CD4-positive, alpha-beta memory T cell (primary cell): ENCODE measurements at regions of chr5 and their contacts with region 1.

Region 1: DNA sequence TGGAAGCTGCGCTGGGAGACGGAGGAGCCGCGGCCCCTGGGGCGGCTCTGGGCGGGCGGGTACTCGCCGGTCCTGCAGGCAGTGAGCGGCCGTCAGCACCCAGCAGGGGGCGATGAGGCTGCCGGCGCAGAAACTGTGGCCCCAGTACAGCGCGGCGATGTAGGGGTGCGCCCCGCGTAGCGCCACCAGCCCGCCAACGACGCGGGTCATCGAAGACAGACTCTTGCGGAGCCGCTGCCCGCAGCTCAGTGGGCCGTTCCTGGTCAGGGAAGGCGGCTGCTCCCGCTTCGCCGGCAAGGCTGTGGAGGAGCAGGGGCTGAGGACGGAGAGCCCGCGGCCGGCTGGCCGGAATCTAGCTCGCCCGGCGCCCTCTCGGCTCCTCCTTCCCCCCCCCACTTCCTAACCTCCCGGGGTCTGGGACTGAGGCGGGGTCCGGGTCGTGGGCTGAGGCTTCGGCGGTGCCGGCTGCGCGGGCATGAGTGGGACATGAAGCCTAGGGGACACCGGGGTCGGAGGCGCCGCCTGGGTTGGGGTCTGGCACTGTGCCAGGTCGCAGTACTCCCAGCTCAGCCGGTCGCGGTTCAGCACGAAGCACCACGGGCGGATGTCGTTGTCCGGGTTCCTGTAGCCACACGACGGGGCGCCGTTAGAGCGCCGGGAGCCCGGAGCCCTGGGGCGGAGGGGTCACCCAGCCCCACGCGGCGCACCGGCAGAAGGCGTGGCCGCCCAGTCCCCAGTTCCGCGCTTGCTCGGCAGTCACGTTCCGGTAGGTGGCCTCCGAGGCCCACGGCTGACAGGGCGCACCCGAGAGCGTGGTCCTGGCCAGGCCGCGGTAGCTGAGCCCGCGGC is 3.6 kb upstream of the PFN3 start:
- DNase-seq: peak; percentile 84 to 85 (median 85)
- H3K4me3 ChIP-seq: peak overlapping the region; percentile 42 to 70
- H3K4me3 Mint-ChIP-seq: peak overlapping the region; percentile 82 to 93 (median 86)
- H3K27ac ChIP-seq: peak overlapping the region; percentile 63
- H3K27ac Mint-ChIP-seq: peak overlapping the region in 6 of 7 donors; percentile 57 to 88 (median 80)
- H3K4me1 ChIP-seq: peaks cover 39% of the 10 kb centered on the region
- H3K4me1 Mint-ChIP-seq: peaks cover 6 to 36% (median 22%) of the 10 kb centered on the region in 4 donors
- H3K27me3 ChIP-seq: no peaks in the 10 kb centered on the region
- H3K27me3 Mint-ChIP-seq: no peaks in the 10 kb centered on the region

Region 2: DNA sequence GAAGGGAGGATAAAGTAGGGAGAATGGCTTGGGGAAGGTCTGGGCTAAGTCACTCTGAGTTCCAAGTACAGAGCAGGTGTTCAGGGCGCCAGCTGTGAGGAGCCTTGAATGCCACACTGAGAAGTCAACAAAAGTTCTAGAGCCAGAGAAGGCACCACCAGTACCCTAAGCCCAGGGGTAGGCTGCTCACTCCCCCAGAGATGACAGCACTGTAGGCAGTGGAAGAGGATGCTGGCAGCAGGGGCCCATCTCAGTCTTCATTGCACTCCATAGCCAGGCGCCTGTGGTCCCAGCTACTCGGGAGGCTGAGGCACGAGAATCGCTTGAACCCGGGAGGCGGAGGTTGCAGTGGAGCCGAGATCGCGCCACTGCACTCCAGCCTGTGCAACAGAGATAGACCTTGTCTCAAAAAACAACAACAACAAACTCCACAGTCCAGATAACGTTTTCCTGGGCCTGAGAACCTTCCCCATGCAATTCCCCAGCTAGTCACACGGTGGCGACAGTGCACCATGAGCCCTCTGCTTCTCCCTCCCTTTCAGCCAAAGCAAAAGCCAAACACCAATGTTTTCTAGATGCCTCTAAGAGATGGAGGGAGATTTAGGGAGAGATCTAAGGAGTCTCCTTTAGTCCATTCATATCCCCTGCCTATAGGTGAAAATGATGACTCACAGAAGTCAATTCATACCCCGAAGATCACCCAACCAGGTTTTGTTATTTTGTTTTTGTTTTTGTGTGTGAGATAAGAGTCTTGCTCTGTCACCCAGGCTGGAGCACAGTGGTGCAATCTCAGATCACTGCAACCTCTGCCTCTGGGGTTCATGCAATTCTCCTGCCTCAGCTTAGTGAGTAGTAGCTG is 290.2 kb before region 1 on chr5:
- CTCF ChIA-PET with region 1: interaction called, 27 read pairs
- POLR2A ChIA-PET with region 1: interaction called, 3 read pairs
- intact Hi-C with region 1: loop called (anchors 1 kb)
- DNase-seq: peak; percentile 71 to 80 (median 76)
- H3K4me3 ChIP-seq: no peak overlapping the region
- H3K4me3 Mint-ChIP-seq: peak overlapping the region in 1 of 8 donors; percentile 24
- H3K27ac ChIP-seq: no peak overlapping the region
- H3K27ac Mint-ChIP-seq: peak overlapping the region in 2 of 7 donors; percentile 31 to 59
- H3K4me1 ChIP-seq: peaks cover 26% of the 10 kb centered on the region
- H3K4me1 Mint-ChIP-seq: peaks cover 11 to 28% (median 17%) of the 10 kb centered on the region in 4 donors
- H3K27me3 ChIP-seq: no peaks in the 10 kb centered on the region
- H3K27me3 Mint-ChIP-seq: no peaks in the 10 kb centered on the region

Region 3: GRCh38 chr5:177317959-177318377 is 86.0 kb before region 1 on chr5:
- CTCF ChIA-PET with region 1: interaction called, 86 read pairs
- POLR2A ChIA-PET with region 1: interaction called, 18 read pairs
- intact Hi-C with region 1: loop called (anchors 1 kb)
- DNase-seq: peak; percentile 68 to 73 (median 69)
- H3K4me3 ChIP-seq: no peak overlapping the region
- H3K4me3 Mint-ChIP-seq: no peak overlapping the region
- H3K27ac ChIP-seq: no peak overlapping the region
- H3K27ac Mint-ChIP-seq: peak overlapping the region in 2 of 7 donors; percentile 10 to 34
- H3K4me1 ChIP-seq: peaks cover 15% of the 10 kb centered on the region
- H3K4me1 Mint-ChIP-seq: peaks cover 8 to 36% (median 20%) of the 10 kb centered on the region in 4 donors
- H3K27me3 ChIP-seq: no peaks in the 10 kb centered on the region
- H3K27me3 Mint-ChIP-seq: no peaks in the 10 kb centered on the region

Region 4: DNA sequence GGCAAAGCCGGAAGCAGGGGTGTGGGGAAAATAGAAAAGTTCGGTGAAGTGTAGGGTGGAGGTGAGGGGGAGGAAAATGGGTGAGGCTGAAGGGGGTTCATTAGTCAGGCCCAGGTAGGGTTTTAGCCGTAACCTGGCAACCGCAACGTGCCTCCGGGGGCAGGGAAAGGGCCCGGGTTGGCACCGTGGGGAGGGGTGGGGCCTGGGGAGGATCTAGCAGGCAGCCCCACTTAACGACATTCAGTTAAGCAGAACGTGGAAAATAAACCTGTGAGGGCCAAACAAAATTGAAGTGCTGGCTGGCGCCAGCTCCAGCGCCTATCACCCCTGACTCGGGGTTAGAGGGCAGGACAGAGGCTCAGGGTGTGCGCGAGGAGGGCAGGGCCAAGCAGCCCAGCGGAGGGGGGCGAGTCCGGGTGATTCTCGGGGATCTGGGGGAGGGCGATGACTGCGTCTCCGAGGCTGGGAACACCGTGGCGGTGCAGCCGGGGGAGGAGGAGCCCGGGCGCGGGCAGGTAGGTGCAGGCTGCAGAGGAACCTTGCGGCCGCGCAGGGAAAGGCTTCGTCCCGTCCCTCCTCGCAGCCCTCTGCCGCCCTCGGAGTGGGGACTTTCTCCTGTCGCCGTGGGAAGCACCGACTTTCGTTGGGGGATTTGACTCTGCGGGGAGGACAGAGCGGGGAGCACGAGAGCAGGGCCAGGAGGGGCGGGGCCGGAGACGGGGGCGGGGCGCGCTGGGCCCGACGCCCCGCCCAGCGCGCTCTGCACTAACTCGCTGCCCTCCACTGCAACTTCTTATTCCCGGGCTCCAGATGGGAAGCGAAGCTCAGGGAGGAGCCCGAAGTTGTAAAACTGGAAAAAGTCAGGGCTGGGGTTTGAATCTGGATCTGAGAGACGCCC is 41.2 kb before region 1 on chr5:
- CTCF ChIA-PET with region 1: interaction called, 31 read pairs
- POLR2A ChIA-PET with region 1: interaction called, 9 read pairs
- intact Hi-C with region 1: loop called (anchors 5 kb)
- DNase-seq: peak; percentile 54 to 86 (median 61)
- H3K4me3 ChIP-seq: peak overlapping the region; percentile 11 to 52
- H3K4me3 Mint-ChIP-seq: peak overlapping the region; percentile 81 to 89 (median 85)
- H3K27ac ChIP-seq: peak overlapping the region; percentile 81
- H3K27ac Mint-ChIP-seq: peak overlapping the region; percentile 86 to 97 (median 92)
- H3K4me1 ChIP-seq: peaks cover 81% of the 10 kb centered on the region
- H3K4me1 Mint-ChIP-seq: peaks cover 40 to 76% (median 59%) of the 10 kb centered on the region in 4 donors
- H3K27me3 ChIP-seq: no peaks in the 10 kb centered on the region
- H3K27me3 Mint-ChIP-seq: no peaks in the 10 kb centered on the region

Region 5: GRCh38 chr5:177382423-177383029 is 21.5 kb before region 1 on chr5:
- CTCF ChIA-PET with region 1: interaction called, 295 read pairs
- POLR2A ChIA-PET with region 1: interaction called, 138 read pairs
- intact Hi-C with region 1: no loop called
- DNase-seq: peak in 1 of 5 donors; percentile 23
- H3K4me3 ChIP-seq: no peak overlapping the region
- H3K4me3 Mint-ChIP-seq: no peak overlapping the region
- H3K27ac ChIP-seq: no peak overlapping the region
- H3K27ac Mint-ChIP-seq: peak overlapping the region in 3 of 7 donors; percentile 42 to 90 (median 76)
- H3K4me1 ChIP-seq: peaks cover 28% of the 10 kb centered on the region
- H3K4me1 Mint-ChIP-seq: peaks cover 11 to 58% (median 20%) of the 10 kb centered on the region in 4 donors
- H3K27me3 ChIP-seq: no peaks in the 10 kb centered on the region
- H3K27me3 Mint-ChIP-seq: no peaks in the 10 kb centered on the region

Region 6: DNA sequence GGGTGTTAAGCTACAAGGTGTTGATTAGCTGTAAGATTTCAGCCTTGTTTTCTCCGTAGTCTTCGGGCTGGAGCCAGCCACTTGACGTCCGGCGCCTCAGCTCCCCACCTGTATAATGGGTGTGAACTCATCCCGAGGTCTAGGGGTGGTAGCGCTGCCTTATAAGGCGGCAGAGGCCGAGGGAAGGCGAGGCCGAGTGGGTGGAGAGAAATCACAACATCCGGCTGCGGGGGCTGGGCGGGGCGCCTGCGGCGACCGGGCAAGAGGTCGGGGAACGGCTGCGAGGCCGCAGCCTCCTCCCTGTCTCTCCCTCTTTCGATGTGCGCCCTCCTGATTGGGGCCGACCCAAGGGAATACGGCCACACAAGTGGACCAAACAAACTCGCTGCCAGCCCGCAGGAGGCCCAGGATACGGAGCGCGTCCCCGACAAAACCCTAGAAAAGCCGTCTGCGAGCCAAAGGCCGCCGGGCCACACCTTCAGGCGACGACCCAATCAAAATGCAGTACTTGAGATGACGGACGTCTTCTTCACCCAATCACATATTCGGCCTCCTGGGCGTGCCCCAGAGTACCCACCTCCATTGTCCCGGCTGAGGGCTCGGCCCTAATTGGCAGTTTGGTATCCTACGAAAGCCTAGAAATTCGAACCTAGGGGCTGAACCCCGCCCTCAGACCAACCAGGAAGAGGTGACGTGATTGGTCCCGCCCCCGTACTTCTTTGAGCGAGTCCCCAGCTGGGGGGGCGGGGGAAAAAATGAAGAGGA is 22.0 kb after region 1 on chr5:
- CTCF ChIA-PET with region 1: interaction called, 307 read pairs
- POLR2A ChIA-PET with region 1: interaction called, 148 read pairs
- intact Hi-C with region 1: loop called (anchors 1 kb)
- DNase-seq: peak; percentile 99 to 100 (median 100)
- H3K4me3 ChIP-seq: peak overlapping the region; percentile 21 to 53
- H3K4me3 Mint-ChIP-seq: peak overlapping the region; percentile 89 to 96 (median 92)
- H3K27ac ChIP-seq: peak overlapping the region; percentile 65
- H3K27ac Mint-ChIP-seq: peak overlapping the region; percentile 91 to 99 (median 99)
- H3K4me1 ChIP-seq: peaks cover 52% of the 10 kb centered on the region
- H3K4me1 Mint-ChIP-seq: peaks cover 31 to 65% (median 44%) of the 10 kb centered on the region in 4 donors
- H3K27me3 ChIP-seq: no peaks in the 10 kb centered on the region
- H3K27me3 Mint-ChIP-seq: no peaks in the 10 kb centered on the region

Region 7: DNA sequence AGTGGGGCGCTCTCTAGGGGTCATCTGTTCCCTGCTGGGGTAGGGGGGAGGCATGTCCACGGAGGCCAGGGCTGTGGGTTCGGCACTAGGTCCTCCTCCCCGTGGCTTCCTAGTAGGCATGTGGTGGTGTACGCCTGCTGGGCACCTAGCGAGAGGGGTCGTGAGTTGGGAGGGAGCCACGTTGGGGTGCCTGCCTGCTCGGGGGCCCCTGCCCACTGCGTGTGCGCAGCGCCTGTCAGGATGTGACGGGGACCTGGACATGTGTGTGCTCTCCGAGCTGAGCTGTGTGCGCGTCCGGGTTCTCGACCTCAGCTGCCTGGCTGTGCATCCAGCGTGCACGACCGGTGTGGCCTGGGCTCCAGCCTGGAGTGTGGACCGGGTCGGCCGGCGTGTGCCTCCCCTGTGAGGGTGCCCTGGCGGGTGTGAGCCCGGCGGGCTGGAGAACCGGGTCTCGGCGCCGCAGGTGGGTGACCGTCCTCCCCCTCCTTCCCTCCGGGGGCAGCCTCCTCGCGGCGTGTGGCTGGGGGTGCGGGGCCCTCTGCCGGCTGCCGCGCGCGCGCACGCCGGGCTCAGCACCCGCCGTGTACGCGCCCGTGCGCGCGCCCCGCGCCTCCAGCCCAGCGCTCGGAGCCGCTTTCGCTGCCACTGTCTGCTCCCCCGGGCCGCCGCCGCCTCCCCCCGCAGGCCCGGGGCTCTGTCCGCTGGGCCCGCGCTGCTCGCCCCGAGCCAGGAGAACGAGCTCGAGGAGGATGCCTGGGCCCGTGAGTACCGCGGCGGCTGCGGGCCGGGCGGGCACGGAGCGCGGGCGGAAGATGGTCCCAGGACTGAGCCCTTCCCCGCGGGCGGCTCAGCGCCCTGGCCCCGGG is 42.4 kb after region 1 on chr5 and contains the start of gene PRR7:
- CTCF ChIA-PET with region 1: interaction called, 821 read pairs
- POLR2A ChIA-PET with region 1: interaction called, 555 read pairs
- intact Hi-C with region 1: loop called (anchors 2 kb)
- DNase-seq: peak; percentile 77 to 85 (median 82)
- H3K4me3 ChIP-seq: peak within 1 kb of the TSS in 1 of 2 donors; percentile 50
- H3K4me3 Mint-ChIP-seq: peak within 1 kb of the TSS; percentile 81 to 90 (median 85)
- H3K27ac ChIP-seq: peak within 1 kb of the TSS; percentile 94
- H3K27ac Mint-ChIP-seq: peak within 1 kb of the TSS; percentile 95 to 99 (median 97)
- H3K4me1 ChIP-seq: peaks cover 51% of the 10 kb centered on the region
- H3K4me1 Mint-ChIP-seq: peaks cover 25 to 53% (median 41%) of the 10 kb centered on the region in 4 donors
- H3K27me3 ChIP-seq: no peaks in the 10 kb centered on the region
- H3K27me3 Mint-ChIP-seq: no peaks in the 10 kb centered on the region
- total RNA-seq, gene PRR7: 5.2 to 7.2 TPM

Region 8: DNA sequence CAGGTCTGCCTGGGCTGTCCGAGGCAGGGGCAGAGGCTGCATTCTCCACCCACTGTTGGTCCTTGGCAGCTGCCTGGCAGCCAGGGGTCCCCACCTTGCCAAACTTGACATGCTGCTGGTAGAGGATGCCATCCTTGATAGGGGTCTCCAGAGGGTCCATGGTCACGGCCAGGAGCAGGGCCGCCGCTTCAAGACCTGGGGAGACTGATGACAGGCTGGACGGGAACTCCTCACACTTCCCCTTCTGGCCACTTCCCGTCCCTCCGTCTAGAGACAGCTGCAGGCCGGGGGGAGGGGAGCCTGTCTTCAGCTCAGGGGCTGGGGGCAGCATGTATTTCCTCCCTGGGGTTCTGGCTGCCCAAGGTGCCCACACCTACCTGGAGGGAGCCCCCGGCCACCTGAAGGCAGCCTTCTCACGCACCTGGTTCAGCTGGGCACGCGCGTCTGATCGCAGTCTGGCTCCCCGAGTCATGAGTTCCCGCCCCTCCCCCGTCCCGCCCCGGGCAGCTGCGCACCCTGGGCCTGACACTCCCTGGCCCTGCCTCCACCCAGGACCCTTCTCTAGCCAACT is 105.5 kb after region 1 on chr5 and contains the start of gene DOK3:
- CTCF ChIA-PET with region 1: no interaction called
- POLR2A ChIA-PET with region 1: no interaction called
- intact Hi-C with region 1: no loop called
- DNase-seq: no peak
- H3K4me3 ChIP-seq: no peak within 1 kb of the TSS
- H3K4me3 Mint-ChIP-seq: no peak within 1 kb of the TSS
- H3K27ac ChIP-seq: no peak within 1 kb of the TSS
- H3K27ac Mint-ChIP-seq: peak within 1 kb of the TSS in 1 of 7 donors; percentile 47
- H3K4me1 ChIP-seq: peaks cover 3% of the 10 kb centered on the region
- H3K4me1 Mint-ChIP-seq: peaks cover 3 to 7% (median 4%) of the 10 kb centered on the region in 4 donors
- H3K27me3 ChIP-seq: no peaks in the 10 kb centered on the region
- H3K27me3 Mint-ChIP-seq: no peaks in the 10 kb centered on the region
- total RNA-seq, gene DOK3: 3.7 to 3.9 TPM